ENCODE measurements at regions of chr6 and their contacts with region 1.

Region 1: GRCh38 chr6:47787620-47788497 is 6.0 kb downstream of the OPN5 start:
- DNase-seq: peak; percentile 65
- H3K4me3 Mint-ChIP-seq: no peak overlapping the region
- H3K27ac Mint-ChIP-seq: no peak overlapping the region
- H3K4me1 Mint-ChIP-seq: peaks cover 1% of the 10 kb centered on the region
- H3K27me3 Mint-ChIP-seq: peaks cover 13% of the 10 kb centered on the region

Region 2: GRCh38 chr6:47302043-47302442 is 485.8 kb before region 1 on chr6:
- CTCF ChIA-PET with region 1: no interaction called
- POLR2A ChIA-PET with region 1: no interaction called
- intact Hi-C with region 1: no loop called
- DNase-seq: no peak
- H3K4me3 Mint-ChIP-seq: no peak overlapping the region
- H3K27ac Mint-ChIP-seq: no peak overlapping the region
- H3K4me1 Mint-ChIP-seq: no peaks in the 10 kb centered on the region
- H3K27me3 Mint-ChIP-seq: peaks cover 33% of the 10 kb centered on the region

Region 3: GRCh38 chr6:47932575-47932974 is 144.7 kb after region 1 on chr6:
- CTCF ChIA-PET with region 1: no interaction called
- POLR2A ChIA-PET with region 1: no interaction called
- intact Hi-C with region 1: no loop called
- DNase-seq: no peak
- H3K4me3 Mint-ChIP-seq: no peak overlapping the region
- H3K27ac Mint-ChIP-seq: no peak overlapping the region
- H3K4me1 Mint-ChIP-seq: no peaks in the 10 kb centered on the region
- H3K27me3 Mint-ChIP-seq: no peaks in the 10 kb centered on the region

Region 4: DNA sequence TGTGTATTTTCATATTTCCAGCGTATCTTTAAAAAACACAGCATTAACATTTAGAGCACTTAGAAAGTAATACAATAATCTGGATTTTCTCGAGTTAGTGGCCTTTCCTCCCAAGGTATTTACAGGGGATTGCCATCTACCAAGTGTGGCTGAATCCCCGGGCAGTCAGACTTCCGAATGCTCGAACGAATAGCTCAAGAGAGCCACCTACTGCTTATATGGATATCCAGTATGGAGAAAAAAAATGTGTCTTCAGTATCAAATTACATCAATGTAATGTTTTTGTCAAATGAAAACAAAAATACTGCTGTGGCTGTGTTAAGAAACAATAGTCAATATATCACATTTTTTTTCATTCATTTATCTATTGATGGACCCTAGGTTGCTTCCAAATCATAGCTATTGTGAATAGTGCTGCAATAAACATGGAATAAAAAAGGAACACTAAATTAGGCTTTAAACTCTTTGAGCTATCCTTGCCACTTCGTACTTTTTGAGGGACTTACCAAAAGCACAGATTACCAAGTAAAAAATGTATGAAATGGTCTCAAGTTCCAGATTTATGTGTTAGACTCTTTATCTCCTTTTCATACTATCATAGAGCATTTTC is 977.6 kb after region 1 on chr6:
- CTCF ChIA-PET with region 1: interaction called, 4 read pairs
- POLR2A ChIA-PET with region 1: no interaction called
- intact Hi-C with region 1: loop called (anchors 2 kb)
- DNase-seq: no peak
- H3K4me3 Mint-ChIP-seq: no peak overlapping the region
- H3K27ac Mint-ChIP-seq: no peak overlapping the region
- H3K4me1 Mint-ChIP-seq: no peaks in the 10 kb centered on the region
- H3K27me3 Mint-ChIP-seq: no peaks in the 10 kb centered on the region

Region 5: DNA sequence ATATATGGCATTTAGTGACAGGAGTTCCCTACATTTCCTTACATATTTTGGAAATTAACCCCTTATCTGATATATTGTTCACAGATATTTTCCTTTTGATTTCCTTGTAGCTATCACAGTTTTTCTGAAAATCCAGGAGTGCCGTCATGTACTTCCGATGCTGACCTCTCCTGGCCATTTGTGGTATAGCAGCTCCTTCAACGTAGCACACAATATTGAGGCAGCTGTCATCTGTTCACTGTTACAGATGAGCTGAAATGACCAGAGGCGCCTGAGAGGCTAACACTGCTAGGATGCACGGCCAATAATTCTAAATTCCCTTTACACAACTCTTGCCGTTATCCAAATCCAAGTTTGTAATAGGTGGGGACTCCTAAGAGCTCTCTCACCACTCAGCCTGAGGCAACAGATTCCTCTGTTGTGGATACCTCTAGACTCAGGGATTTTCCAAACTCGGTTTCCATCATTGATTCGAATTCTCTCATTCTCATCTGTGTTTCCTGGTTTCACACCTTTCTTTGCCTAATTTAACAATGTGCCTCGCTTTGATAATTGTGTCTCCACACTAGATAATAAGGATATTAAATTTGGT is 1622.2 kb after region 1 on chr6:
- CTCF ChIA-PET with region 1: interaction called, 34 read pairs
- POLR2A ChIA-PET with region 1: no interaction called
- intact Hi-C with region 1: loop called (anchors 1 kb)
- DNase-seq: peak; percentile 70
- H3K4me3 Mint-ChIP-seq: no peak overlapping the region
- H3K27ac Mint-ChIP-seq: no peak overlapping the region
- H3K4me1 Mint-ChIP-seq: no peaks in the 10 kb centered on the region
- H3K27me3 Mint-ChIP-seq: peaks cover 5% of the 10 kb centered on the region

Region 6: DNA sequence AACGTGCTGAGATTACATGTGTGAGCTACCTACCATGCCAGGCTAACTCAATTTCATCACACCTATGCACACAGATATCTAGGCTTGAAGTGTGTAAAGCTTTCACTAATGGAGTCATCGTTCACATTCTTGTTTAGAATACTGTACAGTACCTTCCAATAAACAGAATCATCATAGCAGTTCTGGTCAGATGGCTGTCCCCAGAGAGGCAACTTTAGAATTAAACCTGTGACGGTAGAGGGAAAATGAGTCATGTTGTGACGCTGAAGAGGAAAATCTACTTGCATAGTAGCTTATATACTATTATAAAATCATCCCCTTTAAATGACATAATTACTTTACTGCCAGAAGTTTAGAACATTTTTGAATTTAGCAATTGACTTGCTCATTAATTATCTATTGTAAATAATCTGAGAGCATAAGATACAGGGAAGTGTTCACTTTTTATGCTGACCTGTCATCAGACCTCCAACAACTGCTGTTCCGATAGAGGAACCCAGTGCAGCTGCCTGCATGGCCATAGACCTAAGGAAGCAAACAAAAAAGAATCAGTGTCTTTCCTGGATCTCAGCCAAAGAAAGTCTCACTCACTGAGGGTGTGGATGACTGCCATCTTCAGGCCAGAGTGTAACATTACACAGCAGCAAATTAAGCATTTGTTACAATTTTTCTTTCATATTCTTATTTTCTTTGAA is 1819.0 kb after region 1 on chr6:
- CTCF ChIA-PET with region 1: interaction called, 3 read pairs
- POLR2A ChIA-PET with region 1: no interaction called
- intact Hi-C with region 1: loop called (anchors 5 kb)
- DNase-seq: no peak
- H3K4me3 Mint-ChIP-seq: no peak overlapping the region
- H3K27ac Mint-ChIP-seq: no peak overlapping the region
- H3K4me1 Mint-ChIP-seq: no peaks in the 10 kb centered on the region
- H3K27me3 Mint-ChIP-seq: peaks cover 6% of the 10 kb centered on the region